Lower leg skin (tissue), 4 donors: ENCODE measurements at regions of chr2 and their contacts with region 1.

Region 1: DNA sequence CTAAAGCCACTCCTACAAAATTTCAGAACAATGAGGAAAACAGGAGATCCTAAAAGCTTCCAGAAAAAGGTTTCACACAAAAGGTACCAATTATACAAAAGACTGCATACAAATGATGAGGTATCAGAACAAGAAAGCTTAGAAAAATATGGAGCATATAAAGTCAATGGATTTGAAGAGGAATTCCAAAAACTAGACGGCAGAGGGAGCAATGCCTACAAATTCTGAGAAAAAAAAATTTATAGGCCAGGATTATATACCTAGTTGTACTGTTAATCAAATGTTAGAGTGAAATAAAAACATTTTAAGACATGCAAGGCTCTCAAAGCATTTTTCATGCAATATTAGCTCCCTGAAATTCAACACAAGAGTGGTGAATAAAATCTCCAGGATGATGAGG is 106.2 kb downstream of the ZRANB3 start:
- DNase-seq: no peak
- H3K4me3 ChIP-seq: no peak overlapping the region
- CTCF ChIP-seq: no peak
- POLR2A ChIP-seq: no peak

Region 2: DNA sequence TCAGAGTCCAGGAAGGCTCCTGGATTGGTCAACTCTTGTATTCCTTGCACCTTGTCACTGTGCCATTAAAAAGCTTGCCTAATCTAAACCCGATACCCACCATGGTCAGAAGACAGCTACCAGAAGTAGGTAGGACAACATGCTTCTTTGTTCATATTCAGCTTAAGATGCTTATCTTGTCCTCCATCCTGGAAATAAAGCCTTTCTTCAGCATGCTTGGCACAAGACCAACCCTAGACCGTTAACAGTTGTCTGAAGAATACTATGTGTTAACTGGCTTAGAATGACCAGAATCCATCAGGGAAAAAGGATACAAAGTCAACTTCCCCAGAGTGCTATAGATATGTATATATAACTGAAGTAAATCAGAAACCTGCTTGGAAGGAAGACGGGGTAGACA is 87.8 kb before region 1 on chr2:
- intact Hi-C with region 1: no loop called
- DNase-seq: no peak
- H3K4me3 ChIP-seq: no peak overlapping the region
- CTCF ChIP-seq: no peak
- POLR2A ChIP-seq: no peak

Region 3: GRCh38 chr2:137357634-137358033 is 1932.8 kb after region 1 on chr2:
- intact Hi-C with region 1: loop called (anchors 5 kb)
- DNase-seq: no peak
- H3K4me3 ChIP-seq: no peak overlapping the region
- CTCF ChIP-seq: no peak
- POLR2A ChIP-seq: no peak